ENCODE measurements at regions of chr10 and their contacts with region 1.

Region 1: DNA sequence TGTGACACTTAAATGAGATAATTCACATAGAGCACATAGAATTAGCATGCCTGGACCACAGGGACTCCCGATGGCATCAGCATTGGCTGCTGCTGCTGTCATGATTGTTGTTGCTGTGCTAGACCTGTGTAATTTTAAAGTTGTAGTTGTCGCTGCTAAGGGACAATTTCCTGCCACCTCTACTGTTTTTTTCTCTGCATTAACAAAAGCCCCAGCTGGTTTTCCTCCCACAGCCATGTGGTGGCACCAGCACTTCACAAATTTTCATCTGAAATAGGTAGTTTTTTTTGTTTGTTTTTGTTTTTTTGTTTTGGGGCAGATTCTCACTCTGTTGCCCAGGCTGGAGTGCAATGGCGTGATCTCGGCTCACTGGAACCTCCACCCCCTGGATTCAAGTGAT is 25.4 kb upstream of the PRXL2A start:
- DNase-seq: peak in 4 of 5 donors; percentile 50 to 69 (median 62)
- H3K4me3 ChIP-seq: no peak overlapping the region
- H3K4me3 Mint-ChIP-seq: no peak overlapping the region
- H3K27ac ChIP-seq: no peak overlapping the region
- H3K27ac Mint-ChIP-seq: peak overlapping the region in 3 of 7 donors; percentile 2 to 83 (median 2)
- H3K4me1 ChIP-seq: peaks cover 11% of the 10 kb centered on the region
- H3K4me1 Mint-ChIP-seq: peaks cover 7 to 15% (median 12%) of the 10 kb centered on the region in 4 donors
- H3K27me3 ChIP-seq: no peaks in the 10 kb centered on the region
- H3K27me3 Mint-ChIP-seq: peaks cover 0 to 6% of the 10 kb centered on the region in 2 donors

Region 2: DNA sequence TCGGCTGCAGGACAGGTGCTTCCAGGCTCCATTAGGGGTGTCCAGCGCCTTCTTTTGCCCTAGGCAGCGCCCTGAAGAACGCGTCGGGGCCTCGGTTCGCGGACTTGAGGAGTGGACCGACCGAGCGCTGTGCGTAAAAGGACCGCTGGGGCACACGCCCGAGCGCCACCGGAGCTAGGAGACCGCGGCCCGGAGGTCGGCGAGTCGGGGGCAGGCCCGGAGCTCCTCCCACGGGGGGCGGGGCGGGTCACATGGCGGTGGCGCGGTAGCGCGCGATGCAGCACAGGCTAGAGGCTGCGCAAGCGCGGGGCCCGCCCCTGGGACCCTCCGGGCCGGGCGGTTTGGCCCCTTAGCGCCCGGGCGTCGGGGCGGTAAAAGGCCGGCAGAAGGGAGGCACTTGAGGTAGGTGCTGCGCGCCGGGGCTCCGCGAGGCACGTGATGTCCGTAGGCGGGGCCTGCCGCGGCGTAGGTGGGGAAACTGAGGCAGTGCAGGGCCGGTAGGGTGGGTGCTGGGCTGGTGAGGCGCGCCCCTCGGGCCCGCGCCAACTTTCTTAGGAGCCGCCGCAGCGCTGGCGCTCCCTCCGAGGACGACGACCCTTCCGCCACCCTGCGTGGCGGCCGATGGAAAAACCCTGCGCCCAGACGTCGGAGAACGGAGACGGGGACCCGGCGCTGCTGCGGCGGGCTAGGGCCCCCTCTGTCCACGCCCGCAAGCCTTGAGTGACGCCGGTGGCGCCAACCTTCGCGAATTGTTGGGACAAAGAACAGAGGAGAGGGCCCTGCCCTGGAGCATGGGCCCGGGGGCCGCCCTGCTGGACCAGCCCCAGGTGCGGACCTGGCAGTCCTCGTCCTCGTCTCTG is 25.5 kb after region 1 on chr10 and contains the start of gene PRXL2A:
- CTCF ChIA-PET with region 1: interaction called, 21 read pairs
- POLR2A ChIA-PET with region 1: no interaction called
- intact Hi-C with region 1: no loop called
- DNase-seq: peak; percentile 66 to 72 (median 68)
- H3K4me3 ChIP-seq: peak within 1 kb of the TSS; percentile 26 to 64
- H3K4me3 Mint-ChIP-seq: peak within 1 kb of the TSS; percentile 85 to 95 (median 92)
- H3K27ac ChIP-seq: peak within 1 kb of the TSS; percentile 40
- H3K27ac Mint-ChIP-seq: peak within 1 kb of the TSS in 6 of 7 donors; percentile 30 to 88 (median 67)
- H3K4me1 ChIP-seq: peaks cover 10% of the 10 kb centered on the region
- H3K4me1 Mint-ChIP-seq: peaks cover 1 to 11% (median 8%) of the 10 kb centered on the region in 4 donors
- H3K27me3 ChIP-seq: no peaks in the 10 kb centered on the region
- H3K27me3 Mint-ChIP-seq: peaks cover 2 to 3% of the 10 kb centered on the region in 2 donors
- total RNA-seq, gene PRXL2A: 3.6 to 4.7 TPM

Region 3: DNA sequence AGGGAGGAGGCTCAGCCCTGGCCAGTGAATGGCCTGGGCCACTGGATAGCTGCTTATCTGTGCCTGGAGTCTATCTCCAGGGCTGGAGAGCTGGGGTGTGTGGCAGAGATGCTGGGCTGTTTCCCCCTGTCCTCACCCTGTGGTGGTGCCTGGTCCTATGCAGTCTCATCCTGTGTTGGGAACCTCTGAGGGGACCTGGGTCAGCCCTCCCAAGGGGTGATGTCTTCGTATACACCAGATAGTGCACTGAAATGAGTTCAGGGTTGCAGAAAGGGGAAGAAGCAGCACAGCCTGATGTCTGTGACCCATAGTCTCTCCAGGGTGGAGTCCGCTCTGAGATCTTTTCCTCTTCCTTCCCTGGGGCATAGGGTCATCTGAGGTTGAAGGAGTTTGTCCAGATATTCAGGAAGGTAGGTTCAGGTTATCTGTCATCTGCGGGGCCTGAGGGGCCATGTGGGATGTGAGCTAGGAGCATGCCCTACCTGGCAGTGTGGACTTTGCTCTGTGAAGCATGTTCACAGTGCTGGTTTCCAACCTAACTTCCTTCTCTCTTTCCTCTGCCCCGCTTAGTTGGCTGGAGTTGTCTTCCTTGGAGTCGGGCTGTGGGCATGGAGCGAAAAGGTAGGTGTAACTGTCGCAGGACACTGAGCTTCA is 121.3 kb after region 1 on chr10:
- CTCF ChIA-PET with region 1: interaction called, 118 read pairs
- POLR2A ChIA-PET with region 1: interaction called, 3 read pairs
- intact Hi-C with region 1: loop called (anchors 1 kb)
- DNase-seq: no peak
- H3K4me3 ChIP-seq: no peak overlapping the region
- H3K4me3 Mint-ChIP-seq: peak overlapping the region in 5 of 8 donors; percentile 7 to 66 (median 47)
- H3K27ac ChIP-seq: peak overlapping the region; percentile 51
- H3K27ac Mint-ChIP-seq: peak overlapping the region; percentile 83 to 94 (median 90)
- H3K4me1 ChIP-seq: peaks cover 69% of the 10 kb centered on the region
- H3K4me1 Mint-ChIP-seq: peaks cover 61 to 79% (median 69%) of the 10 kb centered on the region in 4 donors
- H3K27me3 ChIP-seq: no peaks in the 10 kb centered on the region
- H3K27me3 Mint-ChIP-seq: no peaks in the 10 kb centered on the region

Region 4: DNA sequence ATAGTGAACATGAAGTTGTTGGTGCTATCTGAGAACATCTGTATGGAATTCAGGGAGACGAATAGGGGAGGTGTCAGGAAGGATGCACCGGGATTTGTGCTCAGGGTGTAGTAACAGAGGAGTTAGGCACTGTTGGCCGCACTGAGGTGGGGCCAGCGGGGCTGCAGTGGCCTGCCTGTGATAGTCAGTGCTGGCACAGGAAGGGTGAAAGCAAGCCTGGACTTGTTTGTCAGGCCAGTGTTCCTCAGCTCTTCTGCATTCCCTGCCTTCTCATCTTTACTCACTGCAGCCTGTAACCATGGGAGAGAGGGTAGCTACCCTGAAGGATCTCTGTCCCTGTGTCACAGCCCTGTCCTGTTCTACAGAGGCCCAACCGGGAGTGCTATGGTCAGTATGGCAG is 236.0 kb after region 1 on chr10:
- CTCF ChIA-PET with region 1: no interaction called
- POLR2A ChIA-PET with region 1: no interaction called
- intact Hi-C with region 1: no loop called
- DNase-seq: no peak
- H3K4me3 ChIP-seq: no peak overlapping the region
- H3K4me3 Mint-ChIP-seq: no peak overlapping the region
- H3K27ac ChIP-seq: no peak overlapping the region
- H3K27ac Mint-ChIP-seq: no peak overlapping the region
- H3K4me1 ChIP-seq: no peaks in the 10 kb centered on the region
- H3K4me1 Mint-ChIP-seq: no peaks in the 10 kb centered on the region
- H3K27me3 ChIP-seq: no peaks in the 10 kb centered on the region
- H3K27me3 Mint-ChIP-seq: peaks cover 0 to 2% of the 10 kb centered on the region in 2 donors

Region 5: DNA sequence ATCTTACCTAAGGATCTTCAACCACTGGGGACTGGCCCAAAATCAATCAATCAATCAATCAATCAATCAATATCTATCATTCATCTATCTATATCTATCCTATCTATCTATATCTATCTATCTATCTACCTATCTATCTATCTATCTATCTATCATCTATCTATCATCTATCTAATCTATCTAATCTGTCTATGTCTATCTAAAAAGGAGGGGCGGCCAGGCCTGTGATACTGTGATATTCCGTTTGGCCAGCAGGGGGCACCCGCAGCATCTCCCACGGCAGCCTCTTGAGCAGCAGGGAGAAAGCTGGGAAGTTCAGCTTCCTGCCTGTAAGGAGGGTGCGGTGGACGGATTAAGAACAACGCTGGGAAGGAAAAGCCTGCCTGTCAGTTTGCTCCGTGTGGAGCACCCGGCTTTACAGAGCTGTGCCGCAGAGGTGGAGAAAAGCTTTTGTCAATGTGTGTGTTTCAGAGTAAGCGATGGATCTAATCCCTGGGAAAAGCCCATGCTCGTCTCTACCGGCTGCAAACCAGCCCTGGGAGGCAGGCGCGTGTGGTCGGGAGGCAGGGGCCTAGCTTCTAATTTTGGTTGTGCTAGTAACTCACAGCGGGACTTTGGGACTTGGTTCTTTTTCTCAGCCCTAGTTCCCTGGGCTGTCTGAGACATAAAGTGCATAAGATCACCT is 279.7 kb after region 1 on chr10:
- CTCF ChIA-PET with region 1: interaction called, 4 read pairs
- POLR2A ChIA-PET with region 1: no interaction called
- intact Hi-C with region 1: loop called (anchors 10 kb)
- DNase-seq: peak; percentile 37 to 58 (median 49)
- H3K4me3 ChIP-seq: no peak overlapping the region
- H3K4me3 Mint-ChIP-seq: peak overlapping the region in 5 of 8 donors; percentile 27 to 70 (median 46)
- H3K27ac ChIP-seq: no peak overlapping the region
- H3K27ac Mint-ChIP-seq: no peak overlapping the region
- H3K4me1 ChIP-seq: peaks cover 5% of the 10 kb centered on the region
- H3K4me1 Mint-ChIP-seq: peaks cover 0 to 4% (median 3%) of the 10 kb centered on the region in 4 donors
- H3K27me3 ChIP-seq: no peaks in the 10 kb centered on the region
- H3K27me3 Mint-ChIP-seq: peaks cover 13 to 16% of the 10 kb centered on the region in 2 donors

Region 6: GRCh38 chr10:80924063-80924952 is 541.3 kb after region 1 on chr10:
- CTCF ChIA-PET with region 1: interaction called, 12 read pairs
- POLR2A ChIA-PET with region 1: no interaction called
- intact Hi-C with region 1: loop called (anchors 2 kb)
- DNase-seq: no peak
- H3K4me3 ChIP-seq: no peak overlapping the region
- H3K4me3 Mint-ChIP-seq: no peak overlapping the region
- H3K27ac ChIP-seq: no peak overlapping the region
- H3K27ac Mint-ChIP-seq: no peak overlapping the region
- H3K4me1 ChIP-seq: no peaks in the 10 kb centered on the region
- H3K4me1 Mint-ChIP-seq: no peaks in the 10 kb centered on the region
- H3K27me3 ChIP-seq: no peaks in the 10 kb centered on the region
- H3K27me3 Mint-ChIP-seq: peaks cover 1 to 5% of the 10 kb centered on the region in 2 donors

Measured in CD4-positive, alpha-beta memory T cell (primary cell).